ENCODE measurements at regions of chr22 and their contacts with region 1.

Region 1: DNA sequence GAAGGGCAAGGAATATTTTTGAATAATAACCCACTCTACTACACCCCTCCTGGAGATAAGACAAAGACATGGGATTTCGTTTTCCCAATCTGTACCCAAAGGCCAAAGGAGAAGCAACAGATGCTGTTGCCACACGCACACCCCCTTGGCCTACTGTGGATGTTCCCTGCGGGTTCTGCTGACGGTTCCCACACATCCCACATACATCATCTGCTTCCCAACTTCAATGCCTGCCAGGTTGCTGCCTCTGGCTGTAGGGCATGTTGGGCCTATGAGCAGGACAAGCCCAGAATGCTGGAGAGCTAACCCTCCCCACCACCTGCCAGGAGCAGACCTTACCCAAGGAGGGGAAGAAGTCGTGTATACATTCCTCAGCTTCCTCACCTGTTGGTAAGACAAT is 13.6 kb upstream of the RBFOX2 start:
- DNase-seq: no peak
- H3K4me3 ChIP-seq: no peak overlapping the region
- H3K27ac ChIP-seq: no peak overlapping the region
- H3K4me1 ChIP-seq: no peaks in the 10 kb centered on the region
- H3K27me3 ChIP-seq: no peaks in the 10 kb centered on the region
- CTCF ChIP-seq: no peak

Region 2: GRCh38 chr22:35971456-35972119 is 70.7 kb before region 1 on chr22:
- CTCF ChIA-PET with region 1: no interaction called
- POLR2A ChIA-PET with region 1: interaction called, 15 read pairs
- intact Hi-C with region 1: no loop called
- DNase-seq: no peak
- H3K4me3 ChIP-seq: no peak overlapping the region
- H3K27ac ChIP-seq: no peak overlapping the region
- H3K4me1 ChIP-seq: peaks cover 16% of the 10 kb centered on the region
- H3K27me3 ChIP-seq: no peaks in the 10 kb centered on the region
- CTCF ChIP-seq: no peak

Measured in PC-9 (cell line).